Mucosa of descending colon (tissue), 3 donors: ENCODE measurements at regions of chr4 and their contacts with region 1.

Region 1: GRCh38 chr4:121199742-121200561 is 35.8 kb upstream of the TNIP3 start:
- DNase-seq: no peak
- ATAC-seq: peak; percentile 69
- H3K4me3 ChIP-seq: no peak overlapping the region
- H3K4me1 ChIP-seq: no peaks in the 10 kb centered on the region
- CTCF ChIP-seq: no peak

Region 2: GRCh38 chr4:121122661-121123060 is 77.3 kb before region 1 on chr4:
- intact Hi-C with region 1: no loop called
- DNase-seq: no peak
- ATAC-seq: no peak
- H3K4me3 ChIP-seq: no peak overlapping the region
- H3K4me1 ChIP-seq: no peaks in the 10 kb centered on the region
- CTCF ChIP-seq: no peak

Region 3: GRCh38 chr4:121252224-121252806 is 52.4 kb after region 1 on chr4:
- intact Hi-C with region 1: loop called in 1 of 2 experiments (anchors 5 kb)
- DNase-seq: peak in 2 of 3 donors; percentile 66 to 84
- ATAC-seq: peak; percentile 78
- H3K4me3 ChIP-seq: no peak overlapping the region
- H3K4me1 ChIP-seq: no peaks in the 10 kb centered on the region
- CTCF ChIP-seq: peak; percentile 76